ENCODE measurements at regions of chr1 and their contacts with region 1.

Region 1: GRCh38 chr1:99969729-99970621 is at the start of gene SLC35A3:
- DNase-seq: peak; percentile 56 to 88 (median 80)
- ATAC-seq: peak; percentile 82
- H3K4me3 ChIP-seq: peak within 1 kb of the TSS; percentile 76 to 89
- H3K4me3 Mint-ChIP-seq: peak within 1 kb of the TSS; percentile 99
- H3K27ac ChIP-seq: peak within 1 kb of the TSS; percentile 72 to 77
- H3K27ac Mint-ChIP-seq: peak within 1 kb of the TSS; percentile 95
- H3K4me1 ChIP-seq: peaks cover 14% of the 10 kb centered on the region
- H3K4me1 Mint-ChIP-seq: peaks cover 36% of the 10 kb centered on the region
- H3K27me3 ChIP-seq: no peaks in the 10 kb centered on the region
- H3K27me3 Mint-ChIP-seq: no peaks in the 10 kb centered on the region
- CTCF ChIP-seq: no peak
- total RNA-seq, gene SLC35A3: 30.2 to 35.4 TPM

Region 2: GRCh38 chr1:99849744-99850458 is 120.1 kb before region 1 on chr1 and contains the start of gene AGL:
- CTCF ChIA-PET with region 1: no interaction called
- POLR2A ChIA-PET with region 1: interaction called, 5 read pairs
- intact Hi-C with region 1: loop called (anchors 2 to 5 kb)
- DNase-seq: peak; percentile 75 to 92 (median 86)
- ATAC-seq: peak; percentile 95
- H3K4me3 ChIP-seq: peak within 1 kb of the TSS; percentile 80 to 96
- H3K4me3 Mint-ChIP-seq: peak within 1 kb of the TSS; percentile 95
- H3K27ac ChIP-seq: peak within 1 kb of the TSS; percentile 70 to 74
- H3K27ac Mint-ChIP-seq: peak within 1 kb of the TSS; percentile 94
- H3K4me1 ChIP-seq: peaks cover 14% of the 10 kb centered on the region
- H3K4me1 Mint-ChIP-seq: peaks cover 42% of the 10 kb centered on the region
- H3K27me3 ChIP-seq: no peaks in the 10 kb centered on the region
- H3K27me3 Mint-ChIP-seq: no peaks in the 10 kb centered on the region
- CTCF ChIP-seq: no peak
- total RNA-seq, gene AGL: 7.6 to 8.4 TPM

Region 3: DNA sequence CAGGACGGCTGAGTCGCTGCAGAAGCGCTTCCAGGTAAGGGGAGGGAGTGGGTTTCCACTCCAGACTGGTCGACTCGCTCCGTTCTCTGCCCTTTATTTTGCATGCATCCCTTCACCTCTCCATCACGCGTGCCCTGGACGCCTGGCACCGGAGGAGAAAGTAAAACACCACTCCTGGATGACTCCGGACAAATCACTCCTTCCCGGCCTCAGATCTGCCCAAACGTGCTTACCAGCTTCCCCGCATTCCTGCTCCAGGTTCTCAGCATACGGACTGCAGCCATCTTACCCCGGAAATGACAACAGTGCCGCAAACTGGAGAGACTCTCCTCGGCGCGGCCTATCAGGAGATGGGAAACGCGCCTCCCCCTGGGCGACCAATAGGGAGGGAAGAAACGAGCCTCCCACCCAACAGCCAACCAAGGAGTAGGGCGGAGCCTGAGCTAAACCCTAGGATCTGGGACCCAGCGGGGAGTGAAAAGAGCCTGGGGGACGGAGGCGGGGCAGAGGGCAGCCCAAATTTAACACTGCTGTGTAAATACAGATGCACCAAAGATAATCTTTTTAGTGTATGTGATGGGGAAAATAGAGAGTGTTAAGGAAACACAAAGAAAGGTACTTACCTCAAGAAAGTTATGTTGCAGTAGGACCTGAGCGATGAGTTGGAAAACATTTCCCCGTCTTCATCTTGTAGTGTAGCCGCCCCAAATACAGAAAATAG is 279.7 kb after region 1 on chr1 and contains the start of gene DBT:
- CTCF ChIA-PET with region 1: no interaction called
- POLR2A ChIA-PET with region 1: no interaction called
- intact Hi-C with region 1: loop called in 1 of 2 experiments (anchors 10 kb)
- DNase-seq: peak; percentile 77 to 96 (median 92)
- ATAC-seq: peak; percentile 100
- H3K4me3 ChIP-seq: peak within 1 kb of the TSS; percentile 68 to 92
- H3K4me3 Mint-ChIP-seq: no peak within 1 kb of the TSS
- H3K27ac ChIP-seq: peak within 1 kb of the TSS; percentile 71 to 87
- H3K27ac Mint-ChIP-seq: no peak within 1 kb of the TSS
- H3K4me1 ChIP-seq: peaks cover 20% of the 10 kb centered on the region
- H3K4me1 Mint-ChIP-seq: peaks cover 18% of the 10 kb centered on the region
- H3K27me3 ChIP-seq: no peaks in the 10 kb centered on the region
- H3K27me3 Mint-ChIP-seq: no peaks in the 10 kb centered on the region
- CTCF ChIP-seq: no peak
- total RNA-seq, gene DBT: 4.6 to 4.9 TPM

Region 4: DNA sequence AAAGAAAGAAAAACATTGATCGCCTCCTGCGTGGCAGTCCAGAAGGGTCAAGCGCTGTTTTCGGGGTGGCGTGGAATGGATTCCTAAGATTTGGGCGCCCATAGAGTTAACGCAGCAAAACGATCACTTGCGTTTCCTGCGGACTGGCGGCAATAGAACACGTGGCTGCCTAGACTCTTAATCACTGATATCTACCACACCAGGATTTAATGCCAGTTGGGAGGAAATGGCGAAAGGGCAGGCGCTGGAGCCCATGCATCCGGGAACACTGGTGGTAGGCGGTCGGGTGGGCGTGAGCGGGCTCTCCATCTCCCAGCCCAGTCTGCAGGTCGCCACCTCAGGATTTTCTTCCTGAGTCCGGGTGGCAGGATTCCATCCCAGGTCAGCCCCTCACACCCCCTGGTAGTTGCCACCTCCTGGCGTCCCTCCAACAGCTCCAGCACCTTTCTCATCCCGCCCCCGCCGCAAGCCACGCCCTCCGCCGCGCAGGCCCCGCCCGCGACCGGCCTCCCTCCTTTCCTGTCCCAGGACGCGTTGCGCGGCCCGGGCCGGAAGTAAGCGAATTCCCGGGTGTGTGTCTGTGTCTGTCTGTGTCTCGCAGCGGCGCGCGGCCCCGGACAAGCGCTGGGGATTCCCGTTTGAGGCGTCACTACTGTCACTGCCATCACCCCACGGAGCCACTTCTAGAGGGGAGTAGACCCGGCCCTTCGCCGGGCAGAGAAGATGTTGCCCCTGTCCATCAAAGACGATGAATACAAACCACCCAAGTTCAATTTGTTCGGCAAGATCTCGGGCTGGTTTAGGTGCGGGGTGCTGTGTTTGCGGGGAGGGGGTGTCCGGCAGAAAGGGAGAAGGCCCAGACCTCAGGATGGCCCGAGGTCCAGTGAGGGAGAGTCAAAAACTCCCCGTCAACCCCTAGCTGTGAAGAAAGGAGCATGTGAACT is 925.8 kb after region 1 on chr1 and contains the start of gene SLC30A7:
- CTCF ChIA-PET with region 1: no interaction called
- POLR2A ChIA-PET with region 1: no interaction called
- intact Hi-C with region 1: loop called (anchors 5 to 10 kb)
- DNase-seq: peak; percentile 91 to 98 (median 96)
- ATAC-seq: peak; percentile 72
- H3K4me3 ChIP-seq: peak within 1 kb of the TSS; percentile 92 to 98
- H3K4me3 Mint-ChIP-seq: peak within 1 kb of the TSS; percentile 100
- H3K27ac ChIP-seq: peak within 1 kb of the TSS; percentile 85 to 99
- H3K27ac Mint-ChIP-seq: peak within 1 kb of the TSS; percentile 100
- H3K4me1 ChIP-seq: peaks cover 20% of the 10 kb centered on the region
- H3K4me1 Mint-ChIP-seq: peaks cover 49% of the 10 kb centered on the region
- H3K27me3 ChIP-seq: no peaks in the 10 kb centered on the region
- H3K27me3 Mint-ChIP-seq: no peaks in the 10 kb centered on the region
- CTCF ChIP-seq: no peak
- total RNA-seq, gene SLC30A7: 18.8 to 20.2 TPM

Measured in CD8-positive, alpha-beta T cell (primary cell).